ENCODE measurements at regions of chr6 and their contacts with region 1.

Region 1: GRCh38 chr6:81166770-81167169 is 585.7 kb downstream of the TENT5A start:
- DNase-seq: no peak
- ATAC-seq: no peak
- H3K4me3 ChIP-seq: no peak overlapping the region
- H3K4me3 Mint-ChIP-seq: no peak overlapping the region
- H3K27ac ChIP-seq: no peak overlapping the region
- H3K27ac Mint-ChIP-seq: no peak overlapping the region
- H3K4me1 ChIP-seq: no peaks in the 10 kb centered on the region
- H3K4me1 Mint-ChIP-seq: no peaks in the 10 kb centered on the region
- H3K27me3 ChIP-seq: no peaks in the 10 kb centered on the region
- H3K27me3 Mint-ChIP-seq: no peaks in the 10 kb centered on the region
- CTCF ChIP-seq: no peak

Region 2: DNA sequence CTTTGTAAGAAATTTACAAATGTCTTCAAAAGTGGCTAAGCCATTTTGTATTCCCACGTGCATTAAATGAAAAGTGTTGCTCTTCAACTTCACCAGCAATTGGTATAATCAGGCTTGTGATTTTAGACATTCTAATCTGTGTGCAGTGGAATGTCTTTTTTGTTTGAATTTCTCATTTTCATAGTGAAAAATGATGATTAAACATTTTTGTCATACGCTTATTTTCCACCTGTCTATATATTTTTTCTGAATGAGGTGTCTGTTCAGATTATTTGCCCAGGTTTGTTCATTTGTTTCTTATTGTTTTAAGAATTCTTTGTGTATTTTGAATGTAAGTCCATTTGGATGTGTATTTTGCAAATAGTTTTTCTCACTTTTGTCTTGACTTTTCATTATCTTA is 27.6 kb after region 1 on chr6:
- CTCF ChIA-PET with region 1: no interaction called
- POLR2A ChIA-PET with region 1: no interaction called
- intact Hi-C with region 1: no loop called
- DNase-seq: no peak
- ATAC-seq: no peak
- H3K4me3 ChIP-seq: no peak overlapping the region
- H3K4me3 Mint-ChIP-seq: no peak overlapping the region
- H3K27ac ChIP-seq: no peak overlapping the region
- H3K27ac Mint-ChIP-seq: no peak overlapping the region
- H3K4me1 ChIP-seq: no peaks in the 10 kb centered on the region
- H3K4me1 Mint-ChIP-seq: no peaks in the 10 kb centered on the region
- H3K27me3 ChIP-seq: no peaks in the 10 kb centered on the region
- H3K27me3 Mint-ChIP-seq: no peaks in the 10 kb centered on the region
- CTCF ChIP-seq: no peak

Region 3: DNA sequence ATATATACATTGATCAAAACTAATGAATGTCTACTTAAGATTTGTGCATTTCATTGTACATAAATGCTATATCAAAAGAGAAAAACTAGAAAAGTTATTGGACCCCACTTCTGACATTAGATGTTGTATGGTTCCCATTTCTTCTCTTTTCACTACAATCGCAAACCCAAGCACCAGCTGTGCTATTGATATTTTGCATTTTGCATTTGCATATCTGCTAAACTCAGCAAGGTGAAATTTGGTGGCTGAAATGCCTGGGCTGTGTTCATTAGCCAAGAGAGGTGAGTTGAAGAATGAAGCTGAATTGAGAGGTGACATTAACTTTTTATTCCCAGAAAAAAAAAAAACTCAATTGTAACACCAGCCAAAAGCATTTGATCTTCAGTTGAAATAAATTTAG is 817.8 kb after region 1 on chr6:
- CTCF ChIA-PET with region 1: no interaction called
- POLR2A ChIA-PET with region 1: no interaction called
- intact Hi-C with region 1: no loop called
- DNase-seq: no peak
- ATAC-seq: no peak
- H3K4me3 ChIP-seq: no peak overlapping the region
- H3K4me3 Mint-ChIP-seq: no peak overlapping the region
- H3K27ac ChIP-seq: no peak overlapping the region
- H3K27ac Mint-ChIP-seq: no peak overlapping the region
- H3K4me1 ChIP-seq: no peaks in the 10 kb centered on the region
- H3K4me1 Mint-ChIP-seq: no peaks in the 10 kb centered on the region
- H3K27me3 ChIP-seq: no peaks in the 10 kb centered on the region
- H3K27me3 Mint-ChIP-seq: peaks cover 2% of the 10 kb centered on the region
- CTCF ChIP-seq: no peak

Region 4: DNA sequence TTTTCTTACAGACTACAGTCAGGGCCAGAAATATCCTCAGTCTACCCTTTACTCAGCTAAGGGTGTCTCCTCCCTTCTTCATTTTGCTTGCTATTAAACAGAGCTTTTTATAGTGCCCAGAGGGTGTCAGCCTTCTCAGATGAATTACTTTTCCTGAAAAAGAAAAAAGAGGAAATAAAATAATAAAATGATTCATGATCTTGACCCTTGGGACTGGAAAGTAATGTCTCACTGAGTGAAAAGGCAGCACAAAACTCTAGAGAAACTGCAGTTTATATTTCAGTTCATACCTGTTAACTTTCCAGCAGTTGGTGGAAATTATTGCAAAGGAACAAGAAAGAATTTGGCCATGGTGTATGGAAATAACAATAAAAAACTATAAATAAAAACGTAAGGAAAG is 910.1 kb after region 1 on chr6:
- CTCF ChIA-PET with region 1: no interaction called
- POLR2A ChIA-PET with region 1: no interaction called
- intact Hi-C with region 1: loop called in 1 of 2 experiments (anchors 5 kb)
- DNase-seq: no peak
- ATAC-seq: no peak
- H3K4me3 ChIP-seq: no peak overlapping the region
- H3K4me3 Mint-ChIP-seq: no peak overlapping the region
- H3K27ac ChIP-seq: no peak overlapping the region
- H3K27ac Mint-ChIP-seq: no peak overlapping the region
- H3K4me1 ChIP-seq: no peaks in the 10 kb centered on the region
- H3K4me1 Mint-ChIP-seq: no peaks in the 10 kb centered on the region
- H3K27me3 ChIP-seq: no peaks in the 10 kb centered on the region
- H3K27me3 Mint-ChIP-seq: no peaks in the 10 kb centered on the region
- CTCF ChIP-seq: no peak

Measured in CD8-positive, alpha-beta T cell (primary cell).